ENCODE measurements at regions of chr3 and their contacts with region 1.

Region 1: GRCh38 chr3:50192689-50193141 is 1.3 kb downstream of the GNAT1 start:
- DNase-seq: peak; percentile 62 to 79
- H3K4me3 ChIP-seq: no peak overlapping the region
- H3K27ac ChIP-seq: no peak overlapping the region
- H3K4me1 ChIP-seq: peaks cover 0 to 28% (median 19%) of the 10 kb centered on the region in 4 donors
- H3K27me3 ChIP-seq: peaks cover 2 to 41% of the 10 kb centered on the region in 2 donors
- CTCF ChIP-seq: peak; percentile 89 to 96

Region 2: DNA sequence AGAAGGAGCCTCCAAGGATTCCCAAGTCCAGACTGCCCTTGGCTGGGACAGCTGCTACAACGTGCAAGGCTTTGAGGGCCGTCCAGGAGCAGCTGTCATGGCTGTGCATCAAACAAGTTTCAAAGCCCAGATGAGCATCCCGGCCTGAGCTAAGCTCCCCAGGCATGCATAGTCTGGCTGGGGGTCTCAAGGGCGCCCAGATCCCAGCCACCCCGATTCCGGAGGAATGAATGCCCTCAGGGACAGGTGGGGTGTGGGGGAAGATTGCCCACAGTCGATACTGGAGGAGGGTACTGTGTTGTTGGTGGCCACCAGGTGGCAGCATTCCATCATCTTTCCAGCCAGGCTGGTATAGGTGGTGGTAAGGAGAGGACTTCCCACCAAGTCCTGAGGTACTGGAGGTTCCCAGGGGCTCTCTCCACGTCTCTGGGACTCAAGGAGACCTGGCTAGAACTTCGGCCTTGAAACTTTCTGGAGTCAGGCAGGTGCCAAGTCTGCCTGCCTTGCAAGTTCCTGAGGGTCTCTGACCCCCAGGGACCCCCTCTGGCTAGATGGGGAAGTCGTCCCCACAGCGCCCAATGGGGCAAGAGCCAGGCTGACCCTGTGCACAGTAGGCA is 71.2 kb before region 1 on chr3:
- intact Hi-C with region 1: loop called (anchors 1 kb)
- DNase-seq: peak; percentile 57 to 82
- H3K4me3 ChIP-seq: no peak overlapping the region
- H3K27ac ChIP-seq: no peak overlapping the region
- H3K4me1 ChIP-seq: peaks cover 0 to 47% (median 29%) of the 10 kb centered on the region in 4 donors
- H3K27me3 ChIP-seq: no peaks in the 10 kb centered on the region
- CTCF ChIP-seq: peak; percentile 67 to 95

Region 3: DNA sequence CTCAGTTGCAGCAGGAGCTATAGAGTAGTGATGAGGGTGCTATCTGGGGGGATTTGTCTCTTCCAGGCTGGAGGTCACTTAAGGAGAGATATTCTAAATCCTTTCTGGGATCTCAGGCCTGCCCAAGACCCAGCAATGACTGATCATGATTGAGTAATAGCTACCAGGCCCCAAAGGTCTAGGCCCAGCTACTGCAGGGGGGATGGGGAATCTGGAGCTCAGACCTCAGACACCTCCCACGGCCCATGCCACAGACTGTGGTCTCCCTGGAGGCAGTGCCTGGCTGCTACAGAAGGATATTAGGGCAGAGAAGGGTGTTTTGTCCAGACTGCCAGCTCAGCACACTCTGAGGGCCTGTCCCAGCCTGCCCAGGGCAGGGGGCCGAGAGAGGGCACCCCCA is 19.2 kb after region 1 on chr3:
- intact Hi-C with region 1: no loop called
- DNase-seq: no peak
- H3K4me3 ChIP-seq: no peak overlapping the region
- H3K27ac ChIP-seq: no peak overlapping the region
- H3K4me1 ChIP-seq: no peaks in the 10 kb centered on the region
- H3K27me3 ChIP-seq: peaks cover 0 to 6% of the 10 kb centered on the region in 2 donors
- CTCF ChIP-seq: no peak

Region 4: GRCh38 chr3:50227390-50228183 is 34.9 kb after region 1 on chr3:
- intact Hi-C with region 1: loop called (anchors 1 kb)
- DNase-seq: peak; percentile 87 to 95
- H3K4me3 ChIP-seq: peak overlapping the region; percentile 67 to 69
- H3K27ac ChIP-seq: peak overlapping the region; percentile 39 to 61
- H3K4me1 ChIP-seq: peaks cover 0 to 32% (median 18%) of the 10 kb centered on the region in 4 donors
- H3K27me3 ChIP-seq: peaks cover 0 to 4% of the 10 kb centered on the region in 2 donors
- CTCF ChIP-seq: peak; percentile 91

Measured in tibial artery (tissue), 4 donors.